HCT116 (cell line): ENCODE measurements at regions of chr15 and their contacts with region 1.

Region 1: GRCh38 chr15:89177633-89178306 is 43.6 kb downstream of the RLBP1 start:
- DNase-seq: peak; percentile 52
- ATAC-seq: peak; percentile 93
- H3K4me3 ChIP-seq: no peak overlapping the region
- H3K27ac ChIP-seq: no peak overlapping the region
- H3K4me1 ChIP-seq: no peaks in the 10 kb centered on the region
- H3K27me3 ChIP-seq: no peaks in the 10 kb centered on the region
- CTCF ChIP-seq: peak; percentile 86 to 92 (median 91)
- POLR2A ChIP-seq: no peak
- RAD21 ChIP-seq: peak; percentile 87

Region 2: DNA sequence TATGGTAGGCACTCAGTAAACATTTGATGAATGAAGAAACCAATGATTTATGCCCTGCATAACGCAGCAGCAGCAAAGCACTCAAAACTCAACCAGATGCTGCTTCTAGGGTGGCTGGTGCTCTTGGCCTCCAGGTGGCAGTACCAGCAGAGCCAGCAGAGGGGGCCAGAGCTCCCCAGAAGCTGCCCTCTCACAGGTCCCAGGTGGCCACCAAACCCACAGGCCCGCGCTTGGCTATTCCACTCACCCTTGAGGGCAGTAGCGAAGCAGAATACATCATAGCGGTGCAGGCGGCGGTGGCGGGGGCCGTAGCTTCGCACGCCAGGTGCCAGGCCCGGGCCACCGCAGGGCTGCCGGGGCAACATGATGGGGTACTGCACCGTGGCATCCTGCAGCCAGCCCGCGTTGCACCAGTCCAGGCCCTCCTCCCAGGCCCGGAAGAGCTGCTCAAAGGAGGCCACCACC is 299.0 kb before region 1 on chr15:
- CTCF ChIA-PET with region 1: interaction called, 12 read pairs
- POLR2A ChIA-PET with region 1: no interaction called
- RAD21 ChIA-PET with region 1: no interaction called
- intact Hi-C with region 1: no loop called
- DNase-seq: no peak
- ATAC-seq: peak; percentile 98
- H3K4me3 ChIP-seq: no peak overlapping the region
- H3K27ac ChIP-seq: no peak overlapping the region
- H3K4me1 ChIP-seq: peaks cover 0 to 10% of the 10 kb centered on the region in 2 experiments; a peak in 2 of 4 replicates
- H3K27me3 ChIP-seq: no peaks in the 10 kb centered on the region
- CTCF ChIP-seq: peak; percentile 84 to 96 (median 85)
- POLR2A ChIP-seq: no peak
- RAD21 ChIP-seq: peak; percentile 78

Region 3: GRCh38 chr15:88904624-88905327 is 273.0 kb before region 1 on chr15:
- CTCF ChIA-PET with region 1: interaction called, 24 read pairs
- POLR2A ChIA-PET with region 1: interaction called, 3 read pairs
- RAD21 ChIA-PET with region 1: interaction called in 1 of 2 experiments, 6 read pairs
- intact Hi-C with region 1: loop called (anchors 2 kb)
- DNase-seq: no peak
- ATAC-seq: peak; percentile 90
- H3K4me3 ChIP-seq: no peak overlapping the region
- H3K27ac ChIP-seq: no peak overlapping the region
- H3K4me1 ChIP-seq: peaks cover 7 to 28% of the 10 kb centered on the region in 2 experiments; a peak in 3 of 4 replicates
- H3K27me3 ChIP-seq: no peaks in the 10 kb centered on the region
- CTCF ChIP-seq: peak; percentile 94 to 97 (median 97)
- POLR2A ChIP-seq: no peak
- RAD21 ChIP-seq: peak; percentile 94

Region 4: GRCh38 chr15:89034288-89034687 is 143.5 kb before region 1 on chr15:
- CTCF ChIA-PET with region 1: interaction called, 15 read pairs
- POLR2A ChIA-PET with region 1: no interaction called
- RAD21 ChIA-PET with region 1: interaction called in 1 of 2 experiments, 8 read pairs
- intact Hi-C with region 1: loop called (anchors 1 kb)
- DNase-seq: peak; percentile 29
- ATAC-seq: peak; percentile 73
- H3K4me3 ChIP-seq: no peak overlapping the region
- H3K27ac ChIP-seq: no peak overlapping the region
- H3K4me1 ChIP-seq: no peaks in the 10 kb centered on the region
- H3K27me3 ChIP-seq: no peaks in the 10 kb centered on the region
- CTCF ChIP-seq: peak; percentile 53 to 61 (median 54); a peak in 5 of 6 replicates
- POLR2A ChIP-seq: no peak
- RAD21 ChIP-seq: peak; percentile 72

Region 5: GRCh38 chr15:89057504-89058133 is 120.2 kb before region 1 on chr15:
- CTCF ChIA-PET with region 1: interaction called, 39 read pairs
- POLR2A ChIA-PET with region 1: no interaction called
- RAD21 ChIA-PET with region 1: interaction called, 3 to 7 read pairs
- intact Hi-C with region 1: loop called (anchors 1 kb)
- DNase-seq: peak; percentile 45
- ATAC-seq: peak; percentile 98
- H3K4me3 ChIP-seq: no peak overlapping the region
- H3K27ac ChIP-seq: no peak overlapping the region
- H3K4me1 ChIP-seq: peaks cover 0 to 6% of the 10 kb centered on the region in 2 experiments; a peak in 1 of 4 replicates
- H3K27me3 ChIP-seq: no peaks in the 10 kb centered on the region
- CTCF ChIP-seq: peak; percentile 98 to 99 (median 99)
- POLR2A ChIP-seq: no peak
- RAD21 ChIP-seq: peak; percentile 97

Region 6: DNA sequence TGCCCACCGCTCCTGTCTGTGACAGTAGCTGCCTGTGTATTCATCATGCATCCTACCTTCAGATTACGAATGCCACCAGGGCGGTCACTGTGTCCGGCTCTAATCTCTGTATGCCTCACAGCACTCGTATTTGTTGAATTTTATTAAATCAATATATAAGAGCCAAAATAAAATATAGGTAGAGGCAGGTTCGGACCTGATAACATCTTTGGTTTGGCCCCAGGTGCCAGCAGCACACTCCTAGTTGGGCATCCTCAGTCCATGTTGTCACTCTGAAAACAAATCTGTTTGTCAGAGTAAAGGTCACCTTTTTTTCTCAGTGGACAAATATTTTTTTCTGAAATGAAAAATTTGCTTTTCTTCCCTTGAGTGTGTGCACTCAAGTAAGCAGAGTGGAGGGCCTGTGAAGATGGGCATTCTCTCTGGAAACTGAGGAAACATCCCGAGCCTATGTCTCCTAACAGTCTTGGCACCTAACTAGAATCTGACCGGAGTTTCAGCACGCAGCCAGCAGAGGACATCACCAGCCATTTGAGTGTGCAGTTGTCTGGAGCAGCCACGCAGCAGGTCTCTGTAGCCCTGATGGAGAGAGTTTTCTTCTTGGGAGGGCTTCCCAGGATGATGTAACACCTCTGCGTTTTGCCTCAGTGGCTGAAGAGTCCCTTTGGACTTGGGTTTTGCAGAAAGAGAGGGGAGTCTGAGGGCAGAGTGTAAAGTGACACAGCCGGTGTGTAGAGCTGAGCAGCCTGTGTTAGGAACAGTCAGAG is 38.2 kb before region 1 on chr15:
- CTCF ChIA-PET with region 1: interaction called, 4 read pairs
- POLR2A ChIA-PET with region 1: no interaction called
- RAD21 ChIA-PET with region 1: no interaction called
- intact Hi-C with region 1: loop called (anchors 5 kb)
- DNase-seq: no peak
- ATAC-seq: peak; percentile 64; the same call in 1 of the 2 replicates
- H3K4me3 ChIP-seq: no peak overlapping the region
- H3K27ac ChIP-seq: no peak overlapping the region
- H3K4me1 ChIP-seq: peaks cover 0 to 5% of the 10 kb centered on the region in 2 experiments; a peak in 1 of 4 replicates
- H3K27me3 ChIP-seq: no peaks in the 10 kb centered on the region
- CTCF ChIP-seq: peak; percentile 17 to 29 (median 22); a peak in 2 of 6 replicates
- POLR2A ChIP-seq: no peak
- RAD21 ChIP-seq: peak; percentile 30; the same call in 1 of the 2 replicates

Region 7: DNA sequence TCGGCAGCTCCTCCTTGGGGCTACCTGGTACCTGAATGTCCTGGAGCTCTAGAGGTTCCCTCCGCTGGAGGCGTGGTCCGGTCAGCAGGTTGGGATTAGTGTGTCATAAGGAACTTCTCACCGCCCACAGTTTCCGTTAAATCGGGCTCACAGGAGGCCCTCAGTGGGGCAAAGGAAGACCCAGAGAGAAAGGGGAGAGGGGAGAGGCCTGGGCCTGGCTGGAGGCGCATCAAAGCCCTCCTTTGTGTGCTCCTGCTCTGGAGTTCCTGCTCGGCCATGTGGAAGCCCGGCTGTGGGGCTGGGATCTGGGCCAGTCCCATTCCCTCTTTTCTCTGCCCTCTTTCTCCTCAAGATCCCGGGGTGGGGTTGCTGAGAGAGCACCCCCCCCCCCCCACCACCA is 43.8 kb after region 1 on chr15 and contains the start of gene RLBP1:
- CTCF ChIA-PET with region 1: no interaction called
- POLR2A ChIA-PET with region 1: no interaction called
- RAD21 ChIA-PET with region 1: no interaction called
- intact Hi-C with region 1: no loop called
- DNase-seq: no peak
- ATAC-seq: no peak
- H3K4me3 ChIP-seq: no peak within 1 kb of the TSS
- H3K27ac ChIP-seq: no peak within 1 kb of the TSS
- H3K4me1 ChIP-seq: peaks cover 0 to 9% of the 10 kb centered on the region in 2 experiments; a peak in 2 of 4 replicates
- H3K27me3 ChIP-seq: no peaks in the 10 kb centered on the region
- CTCF ChIP-seq: no peak
- POLR2A ChIP-seq: no peak
- RAD21 ChIP-seq: no peak
- total RNA-seq, gene RLBP1: 0.12 TPM